Esophagus muscularis mucosa (tissue), 4 donors: ENCODE measurements at regions of chr6 and their contacts with region 1.

Region 1: DNA sequence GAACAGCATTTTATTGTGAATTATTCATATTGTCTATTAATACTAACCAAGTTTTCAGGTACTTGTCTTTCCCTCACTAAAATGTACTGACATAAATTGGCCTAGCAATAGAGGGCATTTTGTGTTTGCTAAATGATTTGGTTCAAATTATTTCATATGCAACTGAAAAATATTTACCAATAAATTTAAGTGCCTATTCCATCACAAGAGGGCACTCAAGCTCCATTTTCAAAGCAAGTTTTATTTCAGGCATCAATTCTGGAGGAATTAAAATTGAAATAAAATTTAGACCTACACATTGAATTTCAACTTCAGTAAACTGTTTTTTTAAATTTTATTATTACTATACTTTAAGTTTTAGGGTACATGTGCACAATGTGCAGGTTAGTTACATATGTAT is 114.3 kb upstream of the SYNCRIP start:
- DNase-seq: no peak
- H3K4me3 ChIP-seq: no peak overlapping the region
- H3K27ac ChIP-seq: no peak overlapping the region
- H3K4me1 ChIP-seq: no peaks in the 10 kb centered on the region
- H3K27me3 ChIP-seq: no peaks in the 10 kb centered on the region
- CTCF ChIP-seq: peak; percentile 37 to 42 (median 39)
- EP300 ChIP-seq: no peak
- POLR2A ChIP-seq: no peak

Region 2: DNA sequence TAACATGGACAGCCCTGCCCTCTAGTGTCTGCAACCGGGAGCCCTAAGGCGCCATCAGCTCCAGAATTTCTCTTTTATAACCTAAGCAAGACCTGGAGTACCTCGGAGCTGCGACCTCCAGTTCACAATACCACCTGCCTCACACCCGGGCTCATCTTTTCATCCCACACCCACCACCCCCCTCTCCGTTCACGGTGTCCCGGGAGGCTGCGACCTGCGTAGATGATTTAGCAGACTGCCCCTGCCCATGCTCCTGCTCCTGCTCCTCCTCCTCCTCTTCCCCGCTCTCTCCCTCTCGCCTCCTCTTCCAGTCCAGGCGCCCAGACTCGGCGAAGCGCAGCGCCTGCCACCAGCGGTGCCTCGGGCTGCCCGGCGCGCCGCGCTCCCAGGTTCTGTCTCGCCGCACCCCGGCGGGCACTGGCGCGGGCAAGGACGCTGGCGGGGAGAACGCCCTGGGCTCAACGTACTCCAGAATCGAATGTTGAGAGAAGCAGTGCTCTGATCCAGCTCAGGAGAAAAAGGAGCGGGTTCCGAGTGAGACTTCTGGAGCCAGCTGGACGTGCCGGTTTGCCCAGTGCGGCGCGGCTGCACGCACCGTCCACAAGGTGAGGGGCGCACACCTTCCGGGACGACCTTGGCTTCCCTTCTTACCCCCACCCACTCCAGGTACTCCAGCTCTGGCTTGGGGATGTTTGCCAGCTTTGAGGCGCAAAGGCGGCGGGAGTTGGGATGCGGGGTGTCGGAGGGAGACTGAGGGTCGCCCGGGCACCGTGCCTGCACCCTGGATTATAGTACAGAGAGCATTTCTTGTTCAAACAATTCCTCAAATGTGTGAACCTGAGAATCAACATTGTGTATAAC is 1180.5 kb after region 1 on chr6 and contains the start of gene HTR1E:
- intact Hi-C with region 1: loop called (anchors 10 kb)
- DNase-seq: peak; percentile 91
- H3K4me3 ChIP-seq: peak within 1 kb of the TSS; percentile 48 to 61 (median 51)
- H3K27ac ChIP-seq: peak within 1 kb of the TSS in 1 of 4 donors; percentile 6
- H3K4me1 ChIP-seq: peaks cover 0 to 16% (median 14%) of the 10 kb centered on the region in 4 donors
- H3K27me3 ChIP-seq: peaks cover 0 to 33% (median 0%) of the 10 kb centered on the region in 4 donors
- CTCF ChIP-seq: peak; percentile 40 to 68 (median 46)
- EP300 ChIP-seq: no peak
- POLR2A ChIP-seq: no peak
- total RNA-seq, gene HTR1E: 0.17 to 0.40 (median 0.19) TPM in 3 of 4 donors, not detected in the other